ENCODE measurements at regions of chr16 and their contacts with region 1.

Region 1: DNA sequence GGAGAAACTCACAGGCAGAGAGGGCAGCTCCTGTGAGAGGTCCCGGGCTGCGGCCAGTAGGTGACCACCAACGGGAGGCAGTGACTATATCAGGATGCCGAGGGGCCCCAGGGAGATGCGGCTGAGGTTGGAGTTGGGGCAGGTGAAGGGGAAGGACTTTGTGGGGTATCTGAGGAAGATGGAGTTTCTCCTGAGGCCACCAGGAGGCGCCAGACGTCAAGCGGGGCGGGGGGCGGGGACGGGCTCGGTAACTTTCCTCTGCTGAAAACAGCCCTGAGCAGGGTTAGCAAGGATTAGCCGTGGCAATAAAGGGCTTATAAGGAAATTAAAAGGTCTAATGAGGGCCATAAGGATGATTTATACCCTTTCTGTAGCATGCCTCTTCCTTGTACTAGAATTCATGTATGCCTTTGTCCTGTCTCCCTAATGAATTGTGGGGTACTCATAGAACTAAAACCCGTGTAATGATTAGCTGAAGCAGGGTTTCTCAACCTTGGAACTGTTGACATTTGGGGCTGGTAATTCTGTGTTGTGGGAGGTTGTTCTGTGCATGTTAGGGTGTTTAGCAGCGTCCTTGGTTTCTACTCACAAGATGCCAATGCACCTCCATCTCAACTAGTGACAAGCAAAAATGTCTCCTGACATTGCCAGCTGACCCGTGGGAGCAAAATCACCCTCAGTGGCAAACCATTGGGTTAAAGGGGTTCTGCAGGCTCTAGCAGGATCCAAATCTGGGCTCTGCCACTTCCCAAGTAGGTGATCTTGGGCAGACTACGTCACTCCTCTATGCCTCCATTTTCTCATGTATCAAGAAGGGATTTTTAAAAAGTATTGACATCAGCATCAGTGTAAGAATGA is 74.8 kb upstream of the GRIN2A start:
- DNase-seq: peak in 4 of 10 donors; percentile 16 to 84 (median 32)

Region 2: GRCh38 chr16:10228546-10229178 is 28.4 kb before region 1 on chr16:
- intact Hi-C with region 1: no loop called
- DNase-seq: no peak

Region 3: GRCh38 chr16:10737068-10737625 is 480.1 kb after region 1 on chr16:
- intact Hi-C with region 1: loop called (anchors 2 kb)
- DNase-seq: peak in 6 of 10 donors; percentile 22 to 69 (median 59)

Measured in posterior cingulate gyrus (tissue), 11 donors.